ENCODE measurements at regions of chr11 and their contacts with region 1.

Region 1: GRCh38 chr11:41222236-41222635 is 237.2 kb downstream of the LRRC4C start:
- DNase-seq: no peak
- H3K4me3 ChIP-seq: no peak overlapping the region
- H3K27ac ChIP-seq: no peak overlapping the region
- H3K4me1 ChIP-seq: no peaks in the 10 kb centered on the region
- H3K27me3 ChIP-seq: no peaks in the 10 kb centered on the region
- CTCF ChIP-seq: no peak
- EP300 ChIP-seq: no peak
- POLR2A ChIP-seq: no peak
- RAD21 ChIP-seq: no peak

Region 2: DNA sequence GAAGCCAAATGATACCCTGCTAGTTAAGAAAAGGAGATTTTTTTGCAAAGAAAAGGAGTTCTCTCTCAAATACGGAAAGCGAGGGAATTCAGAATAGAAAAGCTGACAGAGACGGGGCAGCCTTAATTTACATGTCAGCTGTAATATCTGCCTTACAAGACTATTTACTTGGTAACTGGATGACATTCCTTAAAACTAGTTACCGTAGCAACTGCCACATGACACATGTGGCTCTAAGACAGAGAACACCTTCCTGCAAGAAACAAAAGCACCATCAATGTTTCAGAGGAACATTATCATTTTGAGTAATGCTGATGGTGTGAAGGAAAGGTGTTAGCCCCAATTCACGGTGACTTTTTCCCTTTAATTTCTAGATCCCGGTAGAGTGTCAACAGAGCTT is 15.1 kb after region 1 on chr11:
- CTCF ChIA-PET with region 1: interaction called, 10 read pairs
- POLR2A ChIA-PET with region 1: no interaction called
- DNase-seq: no peak
- H3K4me3 ChIP-seq: no peak overlapping the region
- H3K27ac ChIP-seq: no peak overlapping the region
- H3K4me1 ChIP-seq: peaks cover 0 to 2% (median 0%) of the 10 kb centered on the region in 4 experiments; a peak in 1 of 7 replicates
- H3K27me3 ChIP-seq: no peaks in the 10 kb centered on the region
- CTCF ChIP-seq: no peak
- EP300 ChIP-seq: no peak
- POLR2A ChIP-seq: no peak
- RAD21 ChIP-seq: no peak